ENCODE measurements at regions of chr3 and their contacts with region 1.

Region 1: DNA sequence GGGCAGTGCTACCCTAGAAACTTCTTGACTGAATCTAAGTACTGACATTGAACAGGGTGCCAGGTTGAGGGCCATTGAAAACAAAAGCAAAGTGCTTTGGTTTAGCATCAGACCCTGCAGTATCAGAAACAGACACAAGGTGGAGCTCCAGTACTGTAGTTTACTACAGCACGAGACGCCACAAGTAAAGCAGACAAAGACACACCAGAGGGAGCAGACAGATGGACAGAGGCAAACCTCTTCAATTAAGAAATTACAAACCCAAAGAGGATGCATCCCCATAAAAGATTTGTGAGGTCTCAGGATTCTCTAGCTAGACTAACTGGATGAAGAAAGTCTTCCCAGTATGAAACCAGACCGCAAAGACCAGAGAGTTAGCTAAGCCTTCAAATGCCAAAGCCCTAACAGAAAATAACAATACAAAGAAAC is 16.6 kb downstream of the TOP2B start:
- DNase-seq: peak; percentile 70 to 91 (median 78)
- H3K4me3 ChIP-seq: no peak overlapping the region
- H3K27ac ChIP-seq: no peak overlapping the region
- H3K4me1 ChIP-seq: peaks cover 0 to 7% of the 10 kb centered on the region in 2 donors
- H3K27me3 ChIP-seq: no peaks in the 10 kb centered on the region
- CTCF ChIP-seq: peak; percentile 66 to 92 (median 88)
- POLR2A ChIP-seq: no peak

Region 2: GRCh38 chr3:25856902-25857518 is 208.9 kb after region 1 on chr3:
- intact Hi-C with region 1: loop called in 1 of 2 experiments (anchors 10 kb)
- DNase-seq: peak in 2 of 7 donors; percentile 23 to 29
- H3K4me3 ChIP-seq: no peak overlapping the region
- H3K27ac ChIP-seq: no peak overlapping the region
- H3K4me1 ChIP-seq: no peaks in the 10 kb centered on the region
- H3K27me3 ChIP-seq: no peaks in the 10 kb centered on the region
- CTCF ChIP-seq: peak; percentile 33 to 75 (median 62)
- POLR2A ChIP-seq: no peak